Psoas muscle (tissue), 8 donors: ENCODE measurements at regions of chr6 and their contacts with region 1.

Region 1: DNA sequence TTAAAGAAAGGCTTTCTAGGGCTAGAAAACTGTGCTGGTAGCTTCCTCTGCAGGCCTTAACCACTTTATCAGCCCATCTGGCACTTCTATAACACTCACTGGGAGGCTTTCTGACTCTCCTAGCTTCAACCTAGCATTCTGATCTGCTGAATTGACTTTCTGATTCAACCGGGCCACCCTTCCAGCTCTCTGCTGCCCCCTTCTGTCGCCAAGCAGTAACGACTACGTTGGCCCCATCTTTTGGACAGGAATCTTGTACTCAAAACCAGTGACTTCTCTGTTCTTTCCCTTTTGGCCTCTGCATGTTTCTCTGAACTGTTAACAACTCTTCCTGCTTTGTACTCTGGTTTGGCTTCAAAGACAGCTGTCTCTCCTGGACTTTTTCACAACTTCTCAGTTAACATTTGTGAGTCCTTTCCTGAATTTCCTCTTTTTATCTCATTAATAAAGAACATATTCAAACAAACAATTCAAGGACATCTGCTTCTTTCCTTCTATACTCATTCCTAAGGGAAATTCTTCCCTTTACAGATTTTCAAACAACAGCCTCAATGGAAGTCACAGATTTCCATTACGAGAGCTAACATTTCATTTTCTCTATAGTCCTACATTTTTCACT is 43.9 kb upstream of the FAM135A start:
- DNase-seq: peak; percentile 36 to 78
- ATAC-seq: peak; percentile 62 to 81 (median 74)
- H3K4me3 ChIP-seq: no peak overlapping the region
- H3K27ac ChIP-seq: no peak overlapping the region
- H3K4me1 ChIP-seq: no peaks in the 10 kb centered on the region
- H3K27me3 ChIP-seq: peaks cover 0 to 4% (median 0%) of the 10 kb centered on the region in 3 donors
- CTCF ChIP-seq: peak; percentile 89

Region 2: GRCh38 chr6:68718385-68719073 is 1650.9 kb before region 1 on chr6:
- intact Hi-C with region 1: no loop called
- DNase-seq: no peak
- ATAC-seq: no peak
- H3K4me3 ChIP-seq: no peak overlapping the region
- H3K27ac ChIP-seq: no peak overlapping the region
- H3K4me1 ChIP-seq: no peaks in the 10 kb centered on the region
- H3K27me3 ChIP-seq: no peaks in the 10 kb centered on the region
- CTCF ChIP-seq: no peak

Region 3: DNA sequence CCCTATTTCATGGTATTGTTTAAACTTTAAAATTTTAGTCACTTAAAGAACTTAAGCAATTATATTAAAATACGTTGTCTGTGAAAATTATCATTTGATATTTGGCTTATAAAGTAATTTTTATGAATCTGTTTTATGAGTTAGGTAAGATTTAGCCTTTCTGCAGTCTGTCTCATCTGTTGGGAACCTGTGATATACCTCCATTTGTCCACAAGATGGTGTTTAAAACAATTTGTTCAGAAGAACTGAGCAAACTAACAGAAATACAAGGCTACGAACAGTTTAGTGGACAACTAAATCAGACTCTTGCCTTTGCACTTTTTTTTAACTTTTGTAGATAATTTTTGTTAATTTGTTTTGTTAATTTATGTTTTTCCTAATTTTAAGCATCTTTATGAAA is 159.0 kb before region 1 on chr6:
- intact Hi-C with region 1: no loop called
- DNase-seq: no peak
- ATAC-seq: no peak
- H3K4me3 ChIP-seq: no peak overlapping the region
- H3K27ac ChIP-seq: no peak overlapping the region
- H3K4me1 ChIP-seq: no peaks in the 10 kb centered on the region
- H3K27me3 ChIP-seq: peaks cover 0 to 2% (median 0%) of the 10 kb centered on the region in 3 donors
- CTCF ChIP-seq: peak; percentile 17

Region 4: DNA sequence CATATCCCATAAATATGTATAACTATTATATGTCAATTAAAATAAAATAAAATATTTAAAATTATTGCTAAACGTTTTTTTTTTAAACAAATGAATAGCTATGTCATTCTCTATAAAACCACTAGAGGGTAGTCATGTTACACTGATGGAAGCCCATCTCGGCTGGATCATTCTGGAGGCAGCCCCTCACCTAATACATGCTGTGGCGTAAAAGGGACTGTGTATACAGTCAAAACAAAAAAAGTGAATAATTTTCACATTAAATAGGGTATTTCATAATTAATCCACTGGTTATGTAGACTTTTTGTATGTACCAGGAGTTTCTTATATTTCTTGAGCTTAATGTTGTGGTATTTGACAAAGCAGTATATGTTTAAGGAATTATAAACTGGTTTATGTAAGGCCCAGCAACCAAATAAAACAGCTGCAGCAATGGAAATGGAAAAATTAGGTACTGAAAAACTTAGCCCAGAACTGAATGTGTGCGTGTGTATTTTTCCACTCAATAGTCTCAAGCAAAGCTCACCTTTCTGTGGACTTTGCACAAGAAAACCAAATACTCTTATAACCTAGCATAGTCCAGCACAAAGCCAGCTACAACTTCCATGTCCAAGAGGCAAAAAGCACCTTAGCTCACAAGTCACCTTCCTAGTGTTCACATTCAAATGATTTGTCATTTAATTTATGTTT is 148.3 kb before region 1 on chr6:
- intact Hi-C with region 1: loop called (anchors 2 to 5 kb)
- DNase-seq: no peak
- ATAC-seq: no peak
- H3K4me3 ChIP-seq: no peak overlapping the region
- H3K27ac ChIP-seq: no peak overlapping the region
- H3K4me1 ChIP-seq: no peaks in the 10 kb centered on the region
- H3K27me3 ChIP-seq: no peaks in the 10 kb centered on the region
- CTCF ChIP-seq: peak; percentile 73

Region 5: GRCh38 chr6:70310063-70310694 is 59.3 kb before region 1 on chr6:
- intact Hi-C with region 1: loop called (anchors 1 to 2 kb)
- DNase-seq: no peak
- ATAC-seq: no peak
- H3K4me3 ChIP-seq: no peak overlapping the region
- H3K27ac ChIP-seq: no peak overlapping the region
- H3K4me1 ChIP-seq: no peaks in the 10 kb centered on the region
- H3K27me3 ChIP-seq: no peaks in the 10 kb centered on the region
- CTCF ChIP-seq: peak; percentile 61